ENCODE measurements at regions of chr15 and their contacts with region 1.

Region 1: GRCh38 chr15:72406927-72407326 is 8.8 kb downstream of the TMEM202 start:
- DNase-seq: no peak
- ATAC-seq: no peak
- H3K4me3 ChIP-seq: no peak overlapping the region
- H3K27ac ChIP-seq: no peak overlapping the region
- H3K4me1 ChIP-seq: no peaks in the 10 kb centered on the region
- H3K27me3 ChIP-seq: peaks cover 76% of the 10 kb centered on the region
- CTCF ChIP-seq: no peak

Region 2: GRCh38 chr15:72272213-72273002 is 134.5 kb before region 1 on chr15 and contains the start of gene PARP6:
- CTCF ChIA-PET with region 1: no interaction called
- POLR2A ChIA-PET with region 1: no interaction called
- intact Hi-C with region 1: no loop called
- DNase-seq: no peak
- ATAC-seq: no peak
- H3K4me3 ChIP-seq: no peak within 1 kb of the TSS
- H3K27ac ChIP-seq: no peak within 1 kb of the TSS
- H3K4me1 ChIP-seq: no peaks in the 10 kb centered on the region
- H3K27me3 ChIP-seq: no peaks in the 10 kb centered on the region
- CTCF ChIP-seq: no peak
- total RNA-seq, gene PARP6: not detected in 2 replicates

Region 3: GRCh38 chr15:72365844-72366243 is 41.1 kb before region 1 on chr15:
- CTCF ChIA-PET with region 1: no interaction called
- POLR2A ChIA-PET with region 1: interaction called, 10 read pairs
- intact Hi-C with region 1: no loop called
- DNase-seq: no peak
- ATAC-seq: no peak
- H3K4me3 ChIP-seq: no peak overlapping the region
- H3K27ac ChIP-seq: no peak overlapping the region
- H3K4me1 ChIP-seq: no peaks in the 10 kb centered on the region
- H3K27me3 ChIP-seq: no peaks in the 10 kb centered on the region
- CTCF ChIP-seq: no peak

Region 4: GRCh38 chr15:72420576-72420975 is 13.6 kb after region 1 on chr15:
- CTCF ChIA-PET with region 1: no interaction called
- POLR2A ChIA-PET with region 1: interaction called, 11 read pairs
- intact Hi-C with region 1: no loop called
- DNase-seq: no peak
- ATAC-seq: no peak
- H3K4me3 ChIP-seq: no peak overlapping the region
- H3K27ac ChIP-seq: no peak overlapping the region
- H3K4me1 ChIP-seq: no peaks in the 10 kb centered on the region
- H3K27me3 ChIP-seq: no peaks in the 10 kb centered on the region
- CTCF ChIP-seq: no peak